Activated naive CD4-positive, alpha-beta T cell treated with anti-CD3 and anti-CD28 coated beads, Interleukin-2, amount 10 ng/mL, durations not matched to agents 7 days and 5 days (primary cell): ENCODE measurements at regions of chr12 and their contacts with region 1.

Region 1: GRCh38 chr12:57046947-57047890 is 2.7 kb downstream of the MYO1A start:
- DNase-seq: peak; percentile 68
- H3K4me3 Mint-ChIP-seq: no peak overlapping the region
- H3K27ac Mint-ChIP-seq: peak overlapping the region; percentile 85
- H3K4me1 Mint-ChIP-seq: peaks cover 34% of the 10 kb centered on the region
- H3K27me3 Mint-ChIP-seq: peaks cover 20% of the 10 kb centered on the region

Region 2: GRCh38 chr12:56851462-56851861 is 195.8 kb before region 1 on chr12:
- CTCF ChIA-PET with region 1: no interaction called
- DNase-seq: no peak
- H3K4me3 Mint-ChIP-seq: no peak overlapping the region
- H3K27ac Mint-ChIP-seq: no peak overlapping the region
- H3K4me1 Mint-ChIP-seq: no peaks in the 10 kb centered on the region
- H3K27me3 Mint-ChIP-seq: peaks cover 11% of the 10 kb centered on the region

Region 3: GRCh38 chr12:56931474-56931978 is 115.7 kb before region 1 on chr12:
- CTCF ChIA-PET with region 1: no interaction called
- DNase-seq: no peak
- H3K4me3 Mint-ChIP-seq: no peak overlapping the region
- H3K27ac Mint-ChIP-seq: no peak overlapping the region
- H3K4me1 Mint-ChIP-seq: no peaks in the 10 kb centered on the region
- H3K27me3 Mint-ChIP-seq: peaks cover 23% of the 10 kb centered on the region

Region 4: GRCh38 chr12:57058454-57058853 is 11.2 kb after region 1 on chr12:
- CTCF ChIA-PET with region 1: interaction called, 30 read pairs
- DNase-seq: no peak
- H3K4me3 Mint-ChIP-seq: no peak overlapping the region
- H3K27ac Mint-ChIP-seq: no peak overlapping the region
- H3K4me1 Mint-ChIP-seq: peaks cover 9% of the 10 kb centered on the region
- H3K27me3 Mint-ChIP-seq: no peaks in the 10 kb centered on the region